ENCODE measurements at regions of chr9 and their contacts with region 1.

Region 1: GRCh38 chr9:113578882-113579282 is 115.4 kb downstream of the RGS3 start:
- DNase-seq: peak; percentile 88
- ATAC-seq: peak; percentile 72
- H3K4me3 ChIP-seq: 0 out of 2 replicates have a peak overlapping the region, but pooled peaks have one; percentile 16
- H3K27ac ChIP-seq: peak overlapping the region; percentile 70
- H3K4me1 ChIP-seq: peaks cover 91% of the 10 kb centered on the region
- H3K27me3 ChIP-seq: no peaks in the 10 kb centered on the region
- CTCF ChIP-seq: no peak
- EP300 ChIP-seq: peak; percentile 80 to 85; a peak in 3 of 4 replicates
- POLR2A ChIP-seq: peak; percentile 60
- RAD21 ChIP-seq: no peak; the same call in 1 of the 2 replicates

Region 2: GRCh38 chr9:113446323-113446740 is 132.6 kb before region 1 on chr9:
- CTCF ChIA-PET with region 1: interaction called, 306 read pairs
- POLR2A ChIA-PET with region 1: interaction called, 6 read pairs
- RAD21 ChIA-PET with region 1: interaction called, 74 read pairs
- SMC1A ChIA-PET with region 1: interaction called, 93 read pairs
- in situ Hi-C with region 1: loop called (anchors 5 kb)
- intact Hi-C with region 1: loop called (anchors 2 kb)
- DNase-seq: peak; percentile 25
- ATAC-seq: peak; percentile 80
- H3K4me3 ChIP-seq: no peak overlapping the region
- H3K27ac ChIP-seq: no peak overlapping the region
- H3K4me1 ChIP-seq: no peaks in the 10 kb centered on the region
- H3K27me3 ChIP-seq: no peaks in the 10 kb centered on the region
- CTCF ChIP-seq: peak; percentile 42 to 69 (median 50); a peak in 5 of 6 replicates
- EP300 ChIP-seq: no peak
- POLR2A ChIP-seq: no peak
- RAD21 ChIP-seq: peak; percentile 81

Region 3: GRCh38 chr9:113492343-113493212 is 86.3 kb before region 1 on chr9:
- CTCF ChIA-PET with region 1: interaction called, 11 read pairs
- POLR2A ChIA-PET with region 1: no interaction called
- RAD21 ChIA-PET with region 1: interaction called, 5 read pairs
- SMC1A ChIA-PET with region 1: interaction called, 4 read pairs
- in situ Hi-C with region 1: no loop called
- intact Hi-C with region 1: no loop called
- DNase-seq: no peak
- ATAC-seq: no peak; the same call in 2 of the 3 replicates
- H3K4me3 ChIP-seq: no peak overlapping the region
- H3K27ac ChIP-seq: no peak overlapping the region
- H3K4me1 ChIP-seq: no peaks in the 10 kb centered on the region
- H3K27me3 ChIP-seq: no peaks in the 10 kb centered on the region
- CTCF ChIP-seq: no peak
- EP300 ChIP-seq: no peak
- POLR2A ChIP-seq: no peak
- RAD21 ChIP-seq: no peak

Region 4: DNA sequence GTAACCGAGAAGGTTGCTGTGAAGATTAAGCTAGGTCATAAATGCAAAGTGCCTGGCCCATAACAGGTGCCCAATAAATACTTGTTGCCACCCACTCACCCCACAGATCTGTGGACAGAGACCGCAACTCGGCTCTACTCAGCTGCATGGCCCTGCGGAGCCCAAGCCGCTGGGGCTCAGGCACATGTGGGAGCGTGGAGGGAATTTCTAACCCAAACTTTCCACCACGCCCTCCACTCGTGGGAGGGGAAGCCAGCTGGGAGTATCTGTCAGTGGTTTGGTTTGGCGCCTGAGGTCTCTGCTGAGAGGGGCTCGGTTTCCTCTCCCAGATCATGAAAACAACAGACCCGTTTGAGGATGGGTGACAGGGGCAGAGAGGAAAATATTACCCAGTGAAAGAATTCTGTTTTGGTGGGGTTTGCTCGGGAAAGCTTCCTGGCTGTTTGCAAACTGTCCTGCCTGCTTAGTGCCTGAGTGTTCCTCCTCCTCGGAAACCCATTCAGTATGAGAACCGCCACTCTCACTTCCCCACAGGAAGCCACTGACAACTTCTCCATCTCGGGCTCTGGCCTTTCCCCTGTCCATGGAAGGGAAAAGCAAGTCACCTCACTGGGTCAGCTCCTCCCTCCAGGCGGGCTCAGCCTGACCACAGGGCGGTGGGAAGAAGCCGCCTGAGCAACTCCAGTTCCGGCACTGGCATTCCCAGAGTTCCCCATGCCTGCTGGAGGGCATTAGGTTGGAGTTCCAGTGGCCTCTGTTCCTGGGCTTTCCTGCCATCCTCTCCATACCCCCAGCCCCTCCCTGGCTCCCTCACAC is 55.3 kb before region 1 on chr9:
- CTCF ChIA-PET with region 1: interaction called, 199 read pairs
- POLR2A ChIA-PET with region 1: interaction called, 233 read pairs
- RAD21 ChIA-PET with region 1: interaction called, 481 read pairs
- SMC1A ChIA-PET with region 1: interaction called, 323 read pairs
- in situ Hi-C with region 1: no loop called
- intact Hi-C with region 1: loop called (anchors 1 kb)
- DNase-seq: peak; percentile 85
- ATAC-seq: peak; percentile 75
- H3K4me3 ChIP-seq: peak overlapping the region; percentile 61
- H3K27ac ChIP-seq: peak overlapping the region; percentile 78
- H3K4me1 ChIP-seq: peaks cover 38% of the 10 kb centered on the region
- H3K27me3 ChIP-seq: no peaks in the 10 kb centered on the region
- CTCF ChIP-seq: no peak
- EP300 ChIP-seq: peak in 1 of 2 experiments; percentile 66; a peak in 3 of 4 replicates
- POLR2A ChIP-seq: 0 out of 2 replicates have a peak, but pooled peaks have one; percentile 30
- RAD21 ChIP-seq: no peak; the same call in 1 of the 2 replicates

Region 5: GRCh38 chr9:113591001-113591898 is 12.4 kb after region 1 on chr9:
- CTCF ChIA-PET with region 1: interaction called, 121 read pairs
- POLR2A ChIA-PET with region 1: interaction called, 7 read pairs
- RAD21 ChIA-PET with region 1: interaction called, 81 read pairs
- SMC1A ChIA-PET with region 1: interaction called, 66 read pairs
- in situ Hi-C with region 1: no loop called
- intact Hi-C with region 1: no loop called
- DNase-seq: no peak
- ATAC-seq: peak; percentile 72
- H3K4me3 ChIP-seq: no peak overlapping the region
- H3K27ac ChIP-seq: no peak overlapping the region
- H3K4me1 ChIP-seq: peaks cover 29% of the 10 kb centered on the region
- H3K27me3 ChIP-seq: no peaks in the 10 kb centered on the region
- CTCF ChIP-seq: peak; percentile 87 to 93 (median 92)
- EP300 ChIP-seq: no peak
- POLR2A ChIP-seq: no peak
- RAD21 ChIP-seq: peak; percentile 85

Measured in GM12878 (cell line).